ENCODE measurements at regions of chr1 and their contacts with region 1.

Region 1: DNA sequence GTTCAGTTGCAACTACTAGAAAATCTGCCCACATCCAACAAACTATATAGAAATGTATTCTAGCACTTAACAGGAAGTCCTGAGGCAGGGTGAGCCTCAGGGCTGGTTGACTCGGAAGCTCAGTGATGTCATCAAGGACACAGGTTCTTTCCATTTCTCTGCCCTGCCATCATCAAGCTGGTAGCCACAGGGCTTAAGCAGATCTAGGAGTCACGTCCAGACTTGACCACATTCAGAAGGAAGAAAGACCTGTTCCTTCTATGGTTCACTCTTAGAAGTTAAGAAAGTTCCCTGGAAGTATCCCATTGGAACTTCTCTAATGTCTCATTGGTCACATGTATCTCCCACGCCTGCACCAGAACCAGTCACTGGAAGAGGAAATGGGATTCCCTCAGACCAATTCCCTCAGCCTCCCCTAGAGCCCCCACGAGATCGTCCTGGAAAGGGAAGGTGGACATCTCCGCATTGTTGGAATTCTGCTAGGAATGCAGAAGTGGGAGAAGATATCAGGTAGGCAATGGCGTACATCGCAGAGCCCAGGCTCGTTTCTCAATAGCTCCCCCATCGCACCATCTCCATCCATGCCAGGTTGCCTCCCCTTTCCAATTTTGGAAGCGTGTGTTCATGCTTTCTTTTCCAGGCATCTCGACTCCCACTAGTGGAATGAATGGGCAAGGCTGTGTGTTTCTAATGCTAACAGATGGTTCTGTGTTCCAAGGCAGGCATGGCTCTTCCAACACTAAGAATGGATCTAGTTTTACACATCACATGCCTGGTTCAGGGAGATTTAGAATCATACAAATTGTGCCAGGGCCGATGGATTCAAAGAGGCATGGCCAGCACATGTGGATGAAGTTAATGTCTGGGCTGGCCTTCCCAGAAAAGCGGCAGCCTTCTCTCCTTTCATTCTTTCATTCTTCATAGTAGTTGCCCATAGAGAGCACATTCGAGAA is 438.4 kb downstream of the PRDM2 start:
- DNase-seq: peak; percentile 99
- H3K4me3 ChIP-seq: no peak overlapping the region
- H3K27ac ChIP-seq: peak overlapping the region; percentile 90
- H3K4me1 ChIP-seq: peaks cover 30% of the 10 kb centered on the region
- H3K27me3 ChIP-seq: no peaks in the 10 kb centered on the region
- CTCF ChIP-seq: peak in 1 of 2 donors; percentile 7

Region 2: GRCh38 chr1:14120895-14121294 is 17.5 kb before region 1 on chr1:
- CTCF ChIA-PET with region 1: interaction called, 5 read pairs
- dilution Hi-C with region 1: no loop called
- in situ Hi-C with region 1: no loop called
- intact Hi-C with region 1: loop called (anchors 2 kb)
- DNase-seq: peak; percentile 69
- H3K4me3 ChIP-seq: no peak overlapping the region
- H3K27ac ChIP-seq: no peak overlapping the region
- H3K4me1 ChIP-seq: no peaks in the 10 kb centered on the region
- H3K27me3 ChIP-seq: no peaks in the 10 kb centered on the region
- CTCF ChIP-seq: no peak

Region 3: GRCh38 chr1:14190508-14190907 is 52.1 kb after region 1 on chr1:
- CTCF ChIA-PET with region 1: no interaction called
- dilution Hi-C with region 1: no loop called
- in situ Hi-C with region 1: no loop called
- intact Hi-C with region 1: loop called (anchors 1 kb)
- DNase-seq: peak; percentile 81
- H3K4me3 ChIP-seq: no peak overlapping the region
- H3K27ac ChIP-seq: no peak overlapping the region
- H3K4me1 ChIP-seq: peaks cover 21% of the 10 kb centered on the region
- H3K27me3 ChIP-seq: no peaks in the 10 kb centered on the region
- CTCF ChIP-seq: no peak